ENCODE measurements at regions of chr19 and their contacts with region 1.

Region 1: DNA sequence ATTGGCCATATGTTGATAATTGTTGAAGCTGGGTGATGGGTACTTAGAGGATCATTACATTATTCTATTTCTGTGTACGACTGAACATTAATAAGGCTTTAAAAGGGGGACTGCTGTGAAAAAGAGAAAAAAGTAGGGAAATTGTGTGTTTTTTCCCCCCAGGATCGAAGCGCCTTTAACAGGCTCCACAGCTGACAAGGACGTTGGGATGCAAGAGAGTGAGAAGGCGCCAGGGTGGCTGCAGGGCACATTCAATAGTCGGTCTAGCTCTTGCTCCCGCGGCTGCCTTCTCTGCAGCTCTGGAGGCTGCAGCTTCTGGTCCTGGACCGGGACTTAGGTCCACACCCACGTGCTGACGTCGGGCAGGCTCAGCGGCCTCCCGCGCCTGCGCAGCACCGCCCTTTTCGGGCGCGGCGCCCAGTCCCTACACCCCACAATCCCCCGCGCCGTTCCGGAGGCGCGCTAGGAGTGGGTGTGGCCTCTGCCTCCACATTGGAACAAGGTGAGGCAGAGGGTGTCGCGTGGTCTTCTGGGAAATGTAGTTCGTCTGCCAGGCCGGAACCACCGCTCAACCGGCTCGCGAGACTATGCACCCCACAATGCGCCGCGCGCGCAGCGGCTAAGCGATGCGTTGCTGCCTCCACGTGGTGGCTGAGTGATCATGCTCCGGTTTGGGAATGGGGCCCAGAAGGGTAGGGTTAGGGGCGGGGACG is 4.9 kb upstream of the LRFN3 start:
- DNase-seq: peak; percentile 99
- ATAC-seq: peak; percentile 100

Region 2: GRCh38 chr19:35693830-35694599 is 237.3 kb before region 1 on chr19:
- intact Hi-C with region 1: loop called (anchors 2 kb)
- DNase-seq: peak; percentile 89
- ATAC-seq: peak; percentile 99

Region 3: DNA sequence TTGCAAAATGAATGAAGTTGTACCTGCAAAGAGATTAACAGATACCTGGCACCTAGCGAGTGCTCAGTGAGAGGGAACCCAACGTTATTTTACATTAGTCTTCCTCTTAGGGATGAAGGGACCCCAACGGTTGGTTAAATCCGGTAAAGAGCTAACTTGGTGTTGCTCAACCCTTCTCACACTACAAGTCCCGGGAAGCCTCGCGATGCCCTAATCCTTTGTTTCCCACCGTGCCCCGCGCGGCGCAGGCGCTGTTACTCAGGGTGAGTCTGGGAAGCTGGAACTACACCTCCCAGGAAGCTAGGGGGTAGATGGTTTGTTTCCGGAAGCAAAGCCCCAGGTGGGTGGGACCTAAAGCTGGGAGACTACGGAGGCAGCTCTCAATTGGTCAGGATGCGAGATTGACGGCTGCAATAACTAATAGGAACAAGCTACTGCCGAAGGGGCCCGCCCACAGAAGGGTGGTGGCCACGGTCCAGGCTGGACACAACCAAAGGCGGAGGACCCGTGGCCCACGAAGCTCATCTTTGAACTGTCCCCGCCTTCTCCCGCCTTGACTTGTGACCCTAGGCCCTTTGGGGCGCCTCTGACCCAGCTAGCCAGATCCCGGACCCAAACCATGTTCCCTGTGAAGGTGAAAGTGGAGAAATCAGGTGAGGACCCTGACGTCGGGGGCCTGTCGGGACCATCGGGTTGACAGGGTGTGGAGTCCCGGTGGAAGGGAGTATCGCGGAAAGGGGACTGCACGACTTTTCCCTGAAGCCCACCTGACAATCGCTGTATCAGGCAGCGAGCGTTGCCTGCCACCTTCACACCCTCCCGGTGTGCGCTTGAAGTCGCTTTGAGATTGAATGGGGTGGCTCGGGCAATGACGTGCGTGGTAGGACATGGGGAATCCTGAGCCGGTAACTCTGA is 183.0 kb before region 1 on chr19 and contains the start of gene LIN37:
- intact Hi-C with region 1: loop called (anchors 1 kb)
- DNase-seq: peak; percentile 100
- ATAC-seq: peak; percentile 88
- total RNA-seq, gene LIN37: 8.2 TPM

Region 4: GRCh38 chr19:35899547-35900214 is 31.6 kb before region 1 on chr19:
- intact Hi-C with region 1: loop called (anchors 5 kb)
- DNase-seq: peak; percentile 93
- ATAC-seq: peak; percentile 86

Region 5: DNA sequence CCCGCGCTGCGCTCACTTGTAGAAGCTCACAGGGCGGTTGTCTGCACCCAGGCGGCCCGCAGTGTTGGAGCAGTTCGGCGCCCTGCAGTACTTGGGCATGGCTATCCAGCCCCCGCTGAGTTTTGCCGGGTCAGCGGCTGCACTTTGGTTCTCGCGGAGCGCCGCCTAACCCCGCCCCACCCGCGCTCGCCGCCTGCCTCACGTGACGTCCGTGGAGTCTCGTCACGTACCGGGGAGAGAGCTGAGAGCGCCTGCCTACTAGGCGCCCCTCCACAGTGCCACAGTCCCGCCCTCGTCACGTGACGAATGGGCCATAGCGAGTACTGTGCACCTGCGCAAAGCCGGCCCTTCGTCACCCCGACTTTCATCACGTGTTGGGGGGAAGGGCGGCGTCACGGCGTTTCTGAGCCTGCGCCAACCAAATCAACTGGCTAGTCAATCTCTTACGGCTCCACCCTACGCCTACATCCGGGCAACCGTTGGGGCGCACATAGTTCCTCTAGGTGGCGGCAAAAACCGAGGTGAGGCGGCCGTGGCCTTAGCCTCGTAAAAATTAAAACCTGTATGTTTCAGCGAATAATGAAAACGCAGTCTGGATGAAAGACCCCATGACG is 122.9 kb after region 1 on chr19 and contains the start of gene THAP8:
- intact Hi-C with region 1: loop called (anchors 10 kb)
- DNase-seq: peak; percentile 100
- ATAC-seq: peak; percentile 98
- total RNA-seq, gene THAP8: 4.1 TPM

Measured in Right ventricle myocardium inferior (tissue), 1 donor.